ENCODE measurements at regions of chr6 and their contacts with region 1.

Region 1: DNA sequence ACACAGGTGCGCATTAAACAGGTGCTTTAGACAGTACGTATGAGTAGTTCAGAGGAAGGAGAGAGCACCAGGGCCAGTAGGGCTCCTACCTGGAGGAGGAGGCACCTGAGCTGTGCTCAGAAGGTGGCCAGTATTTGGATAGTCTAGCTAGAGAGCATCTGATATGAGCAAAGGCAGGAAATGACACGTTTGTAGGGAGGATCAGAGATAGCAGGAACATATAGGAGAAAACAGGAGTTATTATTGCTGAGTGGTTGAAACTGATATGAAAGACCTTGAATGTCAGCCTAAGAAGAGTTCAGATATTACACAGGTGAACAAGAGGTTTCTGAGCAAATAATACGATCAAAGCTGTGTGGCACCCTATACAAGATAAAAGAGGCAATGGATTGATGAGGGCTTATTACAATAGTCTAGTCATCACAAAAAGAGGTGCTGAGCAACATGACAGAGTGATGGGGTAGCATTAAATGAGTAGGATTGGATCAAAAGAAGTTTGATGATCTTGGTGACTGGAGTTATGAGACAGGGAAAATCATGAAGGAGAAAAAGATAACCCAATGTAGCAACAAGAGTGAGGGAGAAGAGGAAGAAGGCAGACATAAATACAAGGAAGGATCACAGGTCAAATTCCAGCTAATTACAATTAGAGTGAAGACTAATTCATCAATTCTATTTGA is 69.8 kb upstream of the HIVEP1 start:
- DNase-seq: no peak
- ATAC-seq: no peak
- H3K4me3 Mint-ChIP-seq: no peak overlapping the region
- H3K27ac Mint-ChIP-seq: no peak overlapping the region
- H3K4me1 Mint-ChIP-seq: peaks cover 19% of the 10 kb centered on the region
- H3K27me3 Mint-ChIP-seq: no peaks in the 10 kb centered on the region
- CTCF ChIP-seq: no peak

Region 2: DNA sequence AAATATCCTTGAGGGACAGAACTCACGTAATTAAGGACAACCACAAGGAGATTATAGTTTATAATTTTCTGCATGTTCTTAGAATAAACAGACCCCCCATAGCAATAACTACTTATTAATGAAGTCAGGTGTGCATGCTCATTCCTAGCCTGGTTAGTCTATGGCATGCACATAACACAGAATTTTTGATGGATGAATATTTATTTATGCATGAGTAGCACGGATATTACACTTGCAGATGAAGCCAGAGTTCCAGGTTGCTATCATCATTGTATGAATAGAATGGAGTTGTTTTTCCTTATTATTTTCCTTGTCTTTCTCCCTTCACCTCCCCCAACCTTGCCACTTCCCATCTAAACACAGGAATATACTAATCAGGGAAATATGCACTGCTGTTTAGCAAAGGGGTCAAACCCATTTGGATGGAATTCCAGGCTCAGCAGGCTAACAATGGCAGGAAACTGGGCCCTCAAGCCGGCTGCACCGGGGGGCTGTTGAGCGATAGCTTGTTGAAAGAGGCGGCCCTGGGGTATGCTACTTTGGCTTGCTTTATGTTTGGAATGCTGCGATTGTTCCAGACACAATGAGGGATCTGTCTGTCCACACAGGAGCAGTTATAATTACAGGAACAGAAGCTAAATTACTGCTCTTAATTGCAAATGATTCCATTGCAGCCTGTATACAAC is 292.2 kb before region 1 on chr6:
- CTCF ChIA-PET with region 1: no interaction called
- POLR2A ChIA-PET with region 1: interaction called, 11 read pairs
- DNase-seq: peak; percentile 71
- ATAC-seq: peak; percentile 91
- H3K4me3 Mint-ChIP-seq: peak overlapping the region; percentile 10; the same call in 1 of the 2 replicates
- H3K27ac Mint-ChIP-seq: peak overlapping the region; percentile 98
- H3K4me1 Mint-ChIP-seq: peaks cover 67% of the 10 kb centered on the region
- H3K27me3 Mint-ChIP-seq: no peaks in the 10 kb centered on the region
- CTCF ChIP-seq: no peak

Region 3: GRCh38 chr6:11833626-11834592 is 108.4 kb before region 1 on chr6:
- CTCF ChIA-PET with region 1: no interaction called
- POLR2A ChIA-PET with region 1: no interaction called
- DNase-seq: peak; percentile 24
- ATAC-seq: peak; percentile 58
- H3K4me3 Mint-ChIP-seq: no peak overlapping the region
- H3K27ac Mint-ChIP-seq: no peak overlapping the region
- H3K4me1 Mint-ChIP-seq: peaks cover 11% of the 10 kb centered on the region
- H3K27me3 Mint-ChIP-seq: no peaks in the 10 kb centered on the region
- CTCF ChIP-seq: no peak

Region 4: DNA sequence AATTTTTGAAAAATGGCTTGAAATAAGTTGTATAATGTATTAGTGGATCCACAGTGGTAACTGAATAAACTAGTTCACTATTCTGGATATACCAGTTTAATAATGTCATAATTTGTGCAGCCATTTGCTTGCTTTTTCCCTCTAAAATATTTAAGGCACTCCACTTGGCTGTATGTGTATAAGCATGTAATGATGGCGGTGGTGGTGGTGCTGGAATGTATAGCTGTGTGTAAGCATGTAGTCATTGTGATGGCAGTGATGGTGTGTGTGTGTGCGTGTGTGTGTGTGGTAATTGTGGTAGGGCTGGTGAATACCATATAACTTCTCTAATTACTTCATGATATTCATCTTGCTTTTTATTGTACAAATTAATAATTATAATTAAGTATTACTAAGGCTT is 19.4 kb before region 1 on chr6:
- CTCF ChIA-PET with region 1: no interaction called
- POLR2A ChIA-PET with region 1: no interaction called
- DNase-seq: no peak
- ATAC-seq: no peak
- H3K4me3 Mint-ChIP-seq: no peak overlapping the region
- H3K27ac Mint-ChIP-seq: no peak overlapping the region
- H3K4me1 Mint-ChIP-seq: peaks cover 41% of the 10 kb centered on the region
- H3K27me3 Mint-ChIP-seq: no peaks in the 10 kb centered on the region
- CTCF ChIP-seq: no peak

Measured in WTC11 (cell line).